ENCODE measurements at regions of chr21 and their contacts with region 1.

Region 1: DNA sequence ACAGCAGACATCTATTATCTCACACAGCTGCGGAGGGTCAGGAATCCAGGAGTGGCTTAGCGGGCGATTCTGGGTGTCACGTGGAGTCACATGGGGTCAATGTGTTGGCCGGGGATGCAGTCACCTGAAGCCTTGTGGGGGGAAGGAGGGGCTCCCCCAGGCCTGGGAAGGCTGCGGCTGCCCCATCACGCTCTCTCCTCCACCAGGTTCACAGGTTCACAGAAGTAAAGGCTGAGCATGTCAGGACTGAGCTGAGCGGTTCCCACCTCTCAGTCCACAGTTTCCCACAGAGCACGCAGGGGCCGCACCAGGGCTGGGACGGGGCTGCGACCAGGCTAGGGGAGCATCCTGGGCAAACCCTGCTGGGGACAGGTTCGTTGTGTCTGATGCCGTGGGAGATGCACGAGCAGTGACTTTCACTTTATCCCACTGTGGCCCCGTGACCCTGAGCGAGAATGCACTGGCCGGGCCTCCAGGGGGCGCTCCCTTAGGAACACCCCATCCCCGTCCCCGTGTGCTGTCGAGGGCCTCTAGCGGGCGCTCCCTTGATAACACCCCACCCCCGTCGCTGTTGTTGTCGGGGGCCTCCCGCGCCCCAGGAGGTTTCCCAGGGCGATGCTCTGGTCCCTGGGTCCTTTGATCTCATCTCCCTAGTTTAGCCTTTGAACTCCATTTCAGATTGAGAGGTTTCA is 73.2 kb upstream of the TRAPPC10 start:
- DNase-seq: no peak
- H3K4me3 ChIP-seq: no peak overlapping the region
- H3K27me3 ChIP-seq: no peaks in the 10 kb centered on the region
- CTCF ChIP-seq: peak; percentile 88

Region 2: DNA sequence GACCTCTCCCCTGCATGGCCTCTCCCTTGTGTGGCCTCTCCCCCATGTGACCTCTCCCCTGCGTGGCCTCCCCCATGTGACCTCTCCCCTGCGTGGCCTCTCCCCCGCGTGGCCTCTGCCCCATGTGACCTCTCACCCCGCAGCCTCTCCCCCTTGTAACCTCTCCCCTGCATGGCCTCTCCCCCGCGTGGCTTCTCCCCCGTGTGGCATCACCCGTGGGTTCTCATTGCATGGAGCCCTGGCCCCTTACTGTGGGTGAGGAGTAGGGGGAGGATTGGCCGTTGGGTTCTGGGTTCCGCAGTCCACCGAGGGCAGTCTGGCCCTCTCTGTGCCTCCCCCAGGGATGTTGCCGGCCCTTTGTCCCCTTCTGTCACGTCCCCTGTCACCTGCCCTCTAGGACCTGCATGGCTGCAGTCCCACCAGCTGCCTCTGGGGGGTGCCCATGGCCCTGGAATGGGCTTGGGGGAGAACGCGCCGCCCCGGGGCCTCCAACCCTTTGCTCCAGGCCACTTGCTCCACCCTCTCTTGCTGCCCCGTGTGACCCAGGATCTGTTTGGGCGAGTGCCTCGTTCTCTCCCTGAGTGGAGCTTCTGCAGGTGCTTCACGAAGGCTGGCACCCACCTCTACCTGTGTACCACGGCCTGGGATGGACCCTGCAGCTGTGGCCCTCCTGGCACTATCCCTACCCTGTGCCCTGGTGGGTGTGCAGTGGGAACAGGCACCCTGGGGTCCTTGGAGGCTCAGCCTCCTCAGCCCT is 128.2 kb before region 1 on chr21:
- CTCF ChIA-PET with region 1: interaction called, 10 read pairs
- POLR2A ChIA-PET with region 1: no interaction called
- DNase-seq: no peak
- H3K4me3 ChIP-seq: no peak overlapping the region
- H3K27me3 ChIP-seq: 0 out of 2 replicates have a peak, but pooled peaks cover 1% of the 10 kb centered on the region
- CTCF ChIP-seq: peak; percentile 97

Region 3: GRCh38 chr21:43949499-43950208 is 10.8 kb after region 1 on chr21:
- CTCF ChIA-PET with region 1: interaction called, 11 read pairs
- POLR2A ChIA-PET with region 1: no interaction called
- DNase-seq: no peak
- H3K4me3 ChIP-seq: no peak overlapping the region
- H3K27me3 ChIP-seq: no peaks in the 10 kb centered on the region
- CTCF ChIP-seq: no peak